Left ventricle myocardium superior (tissue), 1 donor: ENCODE measurements at regions of chr1 and their contacts with region 1.

Region 1: GRCh38 chr1:165928075-165928731 is 100.8 kb downstream of the UCK2 start:
- DNase-seq: peak; percentile 32
- ATAC-seq: peak; percentile 47

Region 2: GRCh38 chr1:166432655-166433054 is 504.5 kb after region 1 on chr1:
- intact Hi-C with region 1: loop called (anchors 2 kb)
- DNase-seq: no peak
- ATAC-seq: no peak